Posterior cingulate gyrus (tissue), 11 donors: ENCODE measurements at regions of chr3 and their contacts with region 1.

Region 1: DNA sequence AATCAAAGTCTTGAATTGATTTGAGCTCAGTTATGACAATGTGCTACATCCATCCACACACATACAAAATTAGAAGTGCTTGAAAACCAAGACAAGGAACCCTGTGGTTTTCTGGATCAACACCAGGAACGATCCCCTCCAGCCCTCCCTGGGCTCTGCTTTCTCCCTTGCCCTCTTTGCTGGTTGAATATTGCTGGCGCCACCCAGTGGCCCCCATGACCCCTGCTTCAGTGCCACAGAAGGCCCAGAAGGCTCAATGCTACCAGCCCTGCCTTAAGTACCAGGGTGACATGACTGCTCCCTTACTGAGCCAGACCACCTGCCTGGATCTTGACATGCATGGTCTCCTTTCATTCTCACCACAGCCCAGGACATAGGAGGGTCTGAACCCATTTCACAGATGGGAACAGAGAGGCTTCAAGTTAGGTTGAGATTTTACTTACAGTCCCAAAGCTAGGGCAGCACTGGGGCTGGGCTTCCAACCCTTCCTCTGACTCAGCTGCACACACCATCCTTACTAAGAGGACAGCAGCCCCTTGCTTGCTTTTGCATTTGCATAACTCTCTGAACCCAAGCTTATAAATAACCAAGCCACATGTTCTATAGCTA is 15.0 kb downstream of the IL12A start:
- DNase-seq: peak; percentile 33 to 95 (median 71)

Region 2: DNA sequence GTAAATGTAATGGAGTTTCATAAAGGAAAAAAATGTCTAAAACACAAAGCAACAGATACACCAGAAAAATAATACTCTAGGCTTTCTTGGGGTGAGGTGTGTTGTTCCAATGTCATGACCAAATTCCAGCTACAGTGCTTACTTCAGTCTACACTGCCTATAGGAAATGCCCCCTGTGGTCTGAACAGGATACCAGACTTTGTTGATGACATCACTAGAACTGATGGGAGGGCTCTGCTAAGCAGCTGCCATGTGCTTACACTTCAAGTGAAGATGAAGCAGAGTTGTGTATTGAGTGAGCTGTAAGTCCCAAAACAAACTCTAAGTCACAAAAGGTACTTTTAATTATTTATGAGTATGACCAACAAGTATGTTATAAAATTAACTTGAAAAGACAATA is 471.0 kb before region 1 on chr3:
- intact Hi-C with region 1: no loop called
- DNase-seq: no peak

Region 3: GRCh38 chr3:159616212-159616825 is 387.3 kb before region 1 on chr3:
- intact Hi-C with region 1: loop called (anchors 5 kb)
- DNase-seq: peak in 7 of 10 donors; percentile 24 to 81 (median 44)

Region 4: DNA sequence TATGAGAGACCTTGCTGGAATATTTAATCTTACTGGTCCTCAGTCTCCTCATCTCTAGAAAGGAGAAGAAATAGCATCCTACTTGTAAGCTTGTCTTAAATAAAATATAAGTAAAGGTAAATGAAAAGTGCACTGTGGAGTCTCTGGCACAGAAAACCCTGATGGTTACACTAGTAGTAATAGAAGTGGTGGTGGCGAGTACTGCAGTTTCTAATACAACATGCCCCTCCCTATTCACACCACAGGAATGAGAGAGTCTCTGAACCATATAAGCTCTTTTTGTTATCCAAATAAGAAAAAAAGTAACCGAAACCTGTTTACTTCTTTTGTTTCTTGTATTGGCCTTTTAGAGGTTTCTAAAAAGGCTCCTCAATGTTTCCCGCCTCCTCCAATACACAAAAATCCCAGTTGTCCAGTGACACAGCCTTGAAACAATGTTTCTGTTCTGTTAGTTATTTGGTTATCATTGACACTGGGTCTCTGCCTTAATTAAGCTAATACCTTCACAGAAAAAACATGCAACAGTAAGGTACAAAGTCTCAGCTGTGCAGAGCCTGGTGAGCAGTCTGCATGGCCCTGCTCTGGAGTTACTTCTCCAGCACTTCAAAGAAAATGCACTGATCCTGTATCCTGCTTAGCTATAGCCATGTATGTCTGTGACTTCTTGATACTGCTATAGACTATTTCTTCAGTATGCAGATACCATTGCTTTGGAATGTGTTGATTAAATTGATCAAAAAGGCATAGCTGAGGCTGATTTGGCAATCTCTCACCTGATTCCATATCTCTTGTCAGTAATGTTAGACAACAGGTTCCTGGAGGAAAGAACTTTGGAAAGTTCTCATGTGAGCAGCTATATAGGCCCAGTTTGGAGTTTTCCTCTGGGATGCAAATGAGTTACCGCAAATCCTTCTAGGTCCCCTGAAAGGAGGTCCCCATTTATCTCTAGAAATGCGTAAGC is 330.6 kb before region 1 on chr3:
- intact Hi-C with region 1: no loop called
- DNase-seq: no peak

Region 5: DNA sequence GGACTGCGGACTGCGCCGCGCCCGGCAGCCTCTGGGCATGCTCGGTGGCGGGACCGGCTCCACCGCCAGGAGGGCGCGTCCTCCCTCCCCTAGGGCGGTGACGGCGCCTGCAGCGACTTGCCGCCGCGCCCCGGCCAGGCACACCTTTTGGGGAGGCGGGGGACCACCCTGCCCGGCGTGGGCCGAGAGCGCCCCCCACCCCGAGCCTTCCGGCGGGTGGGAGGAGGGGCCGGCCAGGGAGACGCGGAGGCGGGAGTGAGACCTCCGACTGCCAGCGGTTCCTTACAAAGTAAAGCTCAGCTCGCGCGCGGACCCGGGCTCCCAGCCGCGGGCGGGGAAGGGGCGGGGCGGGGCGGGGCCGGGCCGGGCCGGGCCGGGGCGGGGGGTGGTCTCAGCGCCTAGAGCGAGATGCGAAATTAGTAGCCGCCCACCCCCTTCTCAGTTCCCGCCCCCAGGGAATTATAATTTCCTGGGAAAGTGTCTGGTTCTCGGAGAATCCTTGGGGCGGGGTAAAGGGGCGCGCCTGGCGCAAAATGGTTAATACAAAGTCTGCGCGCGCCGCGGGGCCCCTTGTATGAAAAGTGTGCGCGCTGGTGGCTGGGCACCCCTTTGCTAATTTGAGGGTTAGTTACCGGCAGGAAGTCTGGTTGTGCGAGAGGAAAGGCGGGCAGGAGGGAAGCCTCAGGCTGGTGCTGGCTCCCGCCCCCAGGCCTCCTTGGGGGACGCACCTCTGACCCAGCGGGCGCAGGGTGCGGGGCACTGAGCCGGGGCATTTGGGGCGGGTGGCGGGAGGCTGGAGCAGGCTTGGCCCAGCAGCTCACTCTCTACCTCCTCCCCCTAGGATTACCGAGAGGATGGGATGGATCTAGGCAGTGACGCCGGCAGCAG is 239.8 kb before region 1 on chr3:
- intact Hi-C with region 1: loop called (anchors 5 kb)
- DNase-seq: peak; percentile 42 to 96 (median 63)

Region 6: GRCh38 chr3:159804726-159805410 is 198.8 kb before region 1 on chr3:
- intact Hi-C with region 1: loop called (anchors 5 kb)
- DNase-seq: peak; percentile 49 to 95 (median 77)

Region 7: DNA sequence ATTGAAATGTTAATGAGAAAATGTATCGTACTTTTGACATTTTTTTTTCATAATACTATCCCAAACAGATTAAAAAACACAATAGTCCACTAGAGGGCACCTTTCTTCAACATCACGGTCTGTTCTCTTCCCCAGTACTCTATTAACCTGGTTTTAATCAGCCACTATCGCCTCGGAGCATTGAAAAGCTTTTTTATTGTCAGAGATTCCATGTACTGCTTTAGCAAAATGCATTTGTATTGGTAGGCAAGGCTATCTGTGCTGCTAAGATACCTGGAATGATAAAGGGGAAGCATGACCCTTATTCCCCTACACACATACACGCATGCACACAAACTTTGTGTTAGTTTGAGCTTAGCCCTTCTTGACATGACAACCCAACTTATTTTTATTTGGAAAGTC is 175.1 kb before region 1 on chr3:
- intact Hi-C with region 1: loop called (anchors 2 kb)
- DNase-seq: no peak

Region 8: DNA sequence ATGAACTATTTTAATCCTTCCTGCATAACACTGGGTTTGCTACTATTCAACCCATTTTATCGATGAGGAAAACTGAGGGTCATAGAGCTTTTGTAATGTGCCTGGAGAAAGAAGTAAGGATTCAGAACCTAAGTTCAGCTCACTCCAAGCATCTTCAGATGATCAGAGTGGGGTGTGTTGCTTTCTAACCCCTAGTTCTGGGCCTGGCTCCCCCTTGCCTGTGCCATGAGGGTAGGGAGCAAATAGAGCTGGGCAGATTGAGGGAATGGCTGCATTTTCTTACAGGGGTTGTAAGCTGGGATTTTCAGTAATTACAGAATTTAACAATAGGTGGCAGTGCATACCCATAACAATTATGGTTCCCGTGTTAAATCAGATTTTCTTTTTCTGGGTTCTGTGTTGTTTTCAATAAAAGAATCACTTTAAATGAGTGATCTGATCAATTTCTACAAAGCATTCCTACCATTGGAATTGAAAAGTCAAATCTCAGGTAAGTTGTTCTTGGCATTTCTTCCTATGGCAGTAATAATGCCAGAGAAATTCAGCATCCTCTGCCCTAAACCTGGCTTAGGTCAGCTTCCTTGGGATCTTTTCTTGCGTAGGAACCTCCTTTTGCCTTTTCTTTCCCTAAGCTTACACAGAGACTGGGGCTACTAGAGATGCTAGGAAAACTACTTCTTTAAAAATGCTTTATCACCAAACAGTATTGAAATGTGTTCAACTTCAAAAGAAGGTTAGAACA is 118.8 kb before region 1 on chr3:
- intact Hi-C with region 1: loop called (anchors 1 kb)
- DNase-seq: no peak

Region 9: GRCh38 chr3:159988617-159989271 is 14.9 kb before region 1 on chr3 and contains the start of gene IL12A:
- intact Hi-C with region 1: no loop called
- DNase-seq: peak; percentile 49 to 95 (median 80)